ENCODE measurements at regions of chr3 and their contacts with region 1.

Region 1: GRCh38 chr3:136042608-136043221 is 77.2 kb downstream of the PPP2R3A start:
- DNase-seq: peak; percentile 16 to 54 (median 24)
- ATAC-seq: peak; percentile 75
- H3K4me3 ChIP-seq: no peak overlapping the region
- H3K27ac ChIP-seq: no peak overlapping the region
- H3K4me1 ChIP-seq: no peaks in the 10 kb centered on the region
- H3K27me3 ChIP-seq: no peaks in the 10 kb centered on the region; a peak in 2 of 5 replicates
- CTCF ChIP-seq: peak; percentile 17 to 65 (median 52); a peak in 4 of 6 replicates
- EP300 ChIP-seq: no peak
- POLR2A ChIP-seq: no peak
- RAD21 ChIP-seq: peak; percentile 38 to 62

Region 2: DNA sequence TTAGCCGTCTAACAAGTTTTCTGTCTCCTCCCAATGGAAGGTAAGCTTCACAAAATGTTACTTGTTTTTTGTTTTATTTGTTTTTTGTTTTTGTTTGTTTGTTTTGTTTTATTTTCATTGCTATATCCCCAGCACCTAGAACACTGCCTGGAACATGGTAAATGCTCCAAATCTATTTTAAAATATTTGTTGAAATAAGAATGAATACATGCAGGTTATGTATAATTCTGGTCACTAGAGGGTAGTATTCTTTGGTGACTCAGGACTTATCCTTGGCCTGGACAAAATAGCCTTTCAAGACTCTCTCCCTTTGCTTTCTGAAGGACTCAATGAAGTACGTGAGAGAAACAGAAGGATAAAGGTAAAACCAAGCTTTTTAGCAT is 124.1 kb before region 1 on chr3:
- CTCF ChIA-PET with region 1: no interaction called
- POLR2A ChIA-PET with region 1: no interaction called
- in situ Hi-C with region 1: no loop called
- intact Hi-C with region 1: loop called (anchors 1 kb)
- DNase-seq: peak in 2 of 4 experiments; percentile 4 to 10
- ATAC-seq: peak; percentile 56; the same call in 1 of the 3 replicates
- H3K4me3 ChIP-seq: no peak overlapping the region
- H3K27ac ChIP-seq: no peak overlapping the region
- H3K4me1 ChIP-seq: no peaks in the 10 kb centered on the region
- H3K27me3 ChIP-seq: no peaks in the 10 kb centered on the region
- CTCF ChIP-seq: peak; percentile 15 to 44 (median 29); a peak in 3 of 6 replicates
- EP300 ChIP-seq: no peak
- POLR2A ChIP-seq: no peak
- RAD21 ChIP-seq: peak in 1 of 2 experiments; percentile 31; a peak in 2 of 4 replicates

Measured in K562 (cell line).